ENCODE measurements at regions of chr16 and their contacts with region 1.

Region 1: GRCh38 chr16:80526425-80527061 is 14.2 kb upstream of the DYNLRB2 start:
- DNase-seq: no peak
- H3K4me3 ChIP-seq: no peak overlapping the region
- CTCF ChIP-seq: peak; percentile 74

Region 2: GRCh38 chr16:80407265-80407987 is 119.1 kb before region 1 on chr16:
- CTCF ChIA-PET with region 1: no interaction called
- POLR2A ChIA-PET with region 1: no interaction called
- DNase-seq: no peak
- H3K4me3 ChIP-seq: no peak overlapping the region
- CTCF ChIP-seq: no peak

Region 3: GRCh38 chr16:80511824-80512592 is 14.5 kb before region 1 on chr16:
- CTCF ChIA-PET with region 1: interaction called, 21 read pairs
- POLR2A ChIA-PET with region 1: no interaction called
- DNase-seq: no peak
- H3K4me3 ChIP-seq: no peak overlapping the region
- CTCF ChIP-seq: no peak

Region 4: DNA sequence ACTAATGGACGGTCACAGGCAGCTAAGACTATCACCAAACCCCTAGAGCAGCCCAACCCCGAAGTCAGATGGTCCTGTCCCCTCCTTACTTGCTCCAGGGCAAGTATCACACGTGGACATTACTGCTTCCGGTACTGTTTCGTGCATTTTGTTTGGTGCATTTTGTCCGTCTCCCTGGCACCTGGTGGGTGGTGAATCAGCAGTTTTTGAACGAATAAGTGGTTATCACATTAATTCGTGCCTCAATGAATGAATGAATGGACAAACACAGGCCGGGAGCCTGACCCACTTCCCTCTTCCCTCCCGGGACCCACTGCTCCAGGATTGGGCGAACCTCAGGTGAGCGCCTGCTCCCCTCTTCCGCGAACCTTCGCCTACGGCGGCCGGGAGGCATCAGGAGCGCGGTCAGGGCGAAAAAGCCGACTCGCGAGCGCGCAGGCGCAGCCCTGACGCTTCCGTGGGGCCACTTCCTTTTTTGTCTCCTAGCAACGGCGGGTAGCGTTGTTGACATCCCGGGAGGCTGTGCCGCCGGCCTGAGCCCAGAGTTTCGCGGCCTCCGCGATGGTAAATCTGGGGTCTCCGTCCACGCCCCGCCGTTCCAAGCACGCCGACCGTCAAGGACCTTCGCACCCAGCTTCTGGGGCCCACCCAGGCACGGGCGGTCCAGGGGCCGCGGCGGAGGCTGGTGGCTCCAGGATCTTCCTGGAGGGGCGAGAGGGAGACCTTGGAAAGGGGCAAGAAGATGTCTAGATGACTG is 14.2 kb after region 1 on chr16 and contains the start of gene DYNLRB2:
- CTCF ChIA-PET with region 1: interaction called, 34 read pairs
- POLR2A ChIA-PET with region 1: no interaction called
- DNase-seq: peak; percentile 47
- H3K4me3 ChIP-seq: peak within 1 kb of the TSS; percentile 83
- CTCF ChIP-seq: no peak

Region 5: GRCh38 chr16:80794071-80794470 is 267.5 kb after region 1 on chr16:
- CTCF ChIA-PET with region 1: no interaction called
- POLR2A ChIA-PET with region 1: no interaction called
- DNase-seq: no peak
- H3K4me3 ChIP-seq: no peak overlapping the region
- CTCF ChIP-seq: no peak

Region 6: DNA sequence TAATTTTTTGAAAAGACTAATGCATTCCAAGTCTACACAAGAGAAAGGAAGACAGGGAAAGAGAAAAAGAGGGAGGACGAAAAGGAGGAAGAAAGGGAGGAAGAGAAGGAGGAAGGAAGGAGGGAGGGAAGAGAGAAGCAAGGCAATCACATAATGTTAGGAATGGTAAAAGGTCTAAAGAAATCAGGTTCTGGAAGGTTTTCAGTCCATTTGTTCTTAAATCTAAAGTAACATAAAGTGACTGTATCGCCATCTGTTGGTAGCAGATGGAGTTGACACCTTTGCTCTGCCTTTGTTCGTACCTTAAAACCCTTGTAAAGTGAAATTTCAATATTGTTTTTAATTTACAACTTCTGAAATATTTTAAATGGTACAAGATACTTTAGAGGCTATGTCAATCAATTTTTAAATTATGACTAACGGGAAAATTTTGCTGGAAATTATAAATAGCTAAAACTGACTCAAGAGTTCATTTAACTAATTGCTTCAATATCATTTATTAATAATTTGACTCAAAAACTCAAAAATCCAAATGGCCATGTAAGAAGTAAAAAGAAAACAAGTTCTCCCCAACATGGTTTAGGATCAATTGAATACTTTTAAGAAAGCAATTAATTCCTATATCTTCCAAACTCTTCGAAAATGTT is 298.3 kb after region 1 on chr16:
- CTCF ChIA-PET with region 1: interaction called, 43 read pairs
- POLR2A ChIA-PET with region 1: no interaction called
- DNase-seq: no peak
- H3K4me3 ChIP-seq: no peak overlapping the region
- CTCF ChIP-seq: peak; percentile 62

Region 7: GRCh38 chr16:80852261-80852872 is 325.8 kb after region 1 on chr16:
- CTCF ChIA-PET with region 1: interaction called, 14 read pairs
- POLR2A ChIA-PET with region 1: no interaction called
- DNase-seq: no peak
- H3K4me3 ChIP-seq: no peak overlapping the region
- CTCF ChIP-seq: peak; percentile 44

Measured in AG04449 (cell line).